H1 (cell line): ENCODE measurements at regions of chr9 and their contacts with region 1.

Region 1: DNA sequence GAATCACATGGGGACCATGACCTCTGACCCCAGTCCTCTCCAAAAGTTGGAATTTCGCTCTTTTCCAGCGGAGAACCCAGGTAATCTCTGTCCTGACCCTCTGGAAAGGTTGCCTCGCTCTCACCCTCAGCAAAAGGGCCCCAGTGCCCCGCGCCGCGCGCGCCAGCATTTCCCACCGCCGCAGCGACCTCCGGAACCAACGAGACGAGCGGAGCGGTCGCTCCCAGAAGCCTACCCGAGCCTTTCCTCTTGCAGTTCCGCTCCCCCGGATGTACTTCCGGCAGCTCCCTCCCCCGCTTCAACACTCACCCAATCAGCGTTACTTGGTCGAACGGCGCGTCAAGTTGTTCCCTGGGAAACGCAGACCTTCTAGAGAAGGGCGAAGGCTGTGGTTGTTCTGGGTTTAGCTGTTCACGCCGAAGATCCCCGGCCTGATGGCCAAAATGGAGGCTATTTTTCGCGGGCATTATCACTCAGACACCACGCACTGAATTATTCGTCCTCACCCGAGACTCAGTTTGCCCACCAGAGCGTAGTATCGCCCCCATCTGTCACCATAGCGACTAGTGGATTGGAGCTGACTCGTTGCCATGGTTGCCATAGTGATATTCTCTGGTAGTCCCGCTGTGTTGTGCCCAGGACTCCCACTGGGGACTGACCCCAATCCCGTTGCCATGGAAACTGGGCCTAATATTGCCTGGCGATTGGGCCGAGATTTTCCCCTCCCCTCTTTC is at the start of gene STOML2:
- DNase-seq: peak; percentile 89 to 91
- H3K4me3 ChIP-seq: peak within 1 kb of the TSS; percentile 71 to 99 (median 98)
- H3K27ac ChIP-seq: peak within 1 kb of the TSS; percentile 96
- H3K4me1 ChIP-seq: peaks cover 0 to 17% (median 6%) of the 10 kb centered on the region in 4 experiments; a peak in 5 of 7 replicates
- H3K27me3 ChIP-seq: no peaks in the 10 kb centered on the region
- CTCF ChIP-seq: no peak
- EP300 ChIP-seq: no peak; a peak in 1 of 3 replicates
- POLR2A ChIP-seq: peak; percentile 79 to 85
- RAD21 ChIP-seq: no peak
- total RNA-seq, gene STOML2: 203 and 208 TPM in 2 replicates

Region 2: DNA sequence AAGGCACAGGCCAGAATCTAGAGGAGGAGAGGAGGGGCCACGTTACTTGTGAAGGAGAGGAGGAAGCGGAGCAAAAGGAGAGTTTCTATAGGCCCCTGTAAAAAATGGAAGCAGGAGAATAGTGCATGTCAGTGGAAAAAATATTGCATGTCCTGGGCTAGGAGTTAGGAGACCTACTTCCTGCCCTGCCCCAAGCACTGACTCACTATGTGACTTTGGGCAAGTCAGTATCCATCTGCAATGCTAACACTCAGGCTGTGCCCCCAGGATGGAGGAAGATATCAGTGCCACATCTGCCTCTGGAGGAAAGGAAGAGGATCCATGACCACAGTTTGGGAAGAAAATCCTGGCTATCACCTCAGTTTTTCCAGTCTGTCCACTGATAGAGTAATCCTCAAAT is 13.7 kb before region 1 on chr9:
- CTCF ChIA-PET with region 1: interaction called, 5 read pairs
- POLR2A ChIA-PET with region 1: interaction called, 22 read pairs
- DNase-seq: no peak
- H3K4me3 ChIP-seq: no peak overlapping the region
- H3K27ac ChIP-seq: no peak overlapping the region
- H3K4me1 ChIP-seq: no peaks in the 10 kb centered on the region
- H3K27me3 ChIP-seq: no peaks in the 10 kb centered on the region
- CTCF ChIP-seq: no peak
- EP300 ChIP-seq: no peak
- POLR2A ChIP-seq: no peak
- RAD21 ChIP-seq: no peak